ENCODE measurements at regions of chr6 and their contacts with region 1.

Region 1: GRCh38 chr6:45310118-45310788 is 17.9 kb upstream of the RUNX2 start:
- DNase-seq: peak in 8 of 9 donors; percentile 24 to 71 (median 60)
- ATAC-seq: peak; percentile 76
- H3K4me3 ChIP-seq: peak overlapping the region; percentile 32
- H3K4me3 Mint-ChIP-seq: peak overlapping the region; percentile 63 to 84 (median 80)
- H3K27ac ChIP-seq: peak overlapping the region; percentile 44
- H3K27ac Mint-ChIP-seq: peak overlapping the region; percentile 85 to 95 (median 90)
- H3K4me1 ChIP-seq: peaks cover 14 to 33% of the 10 kb centered on the region in 2 donors
- H3K4me1 Mint-ChIP-seq: peaks cover 39 to 86% (median 78%) of the 10 kb centered on the region in 7 donors
- H3K27me3 ChIP-seq: no peaks in the 10 kb centered on the region
- H3K27me3 Mint-ChIP-seq: no peaks in the 10 kb centered on the region

Region 2: DNA sequence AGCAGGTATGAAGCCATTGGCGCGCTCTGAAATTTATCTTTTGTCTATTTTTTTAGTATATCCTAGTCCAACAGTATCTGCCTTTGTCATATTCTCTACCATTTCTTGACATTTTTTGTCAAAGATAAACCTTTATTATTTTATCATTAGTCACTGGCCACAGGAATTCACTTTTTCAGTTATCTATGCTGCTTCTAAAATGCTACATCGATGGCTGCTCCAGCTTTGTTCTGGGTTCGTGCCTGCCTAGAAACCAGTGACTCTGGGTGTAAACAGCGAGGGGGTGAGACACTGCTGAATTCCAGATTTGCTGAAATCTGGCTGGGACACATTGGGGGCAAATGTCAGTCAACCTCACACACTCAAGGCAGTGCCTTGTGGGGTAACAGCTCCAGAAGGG is 729.4 kb before region 1 on chr6:
- CTCF ChIA-PET with region 1: no interaction called
- POLR2A ChIA-PET with region 1: no interaction called
- intact Hi-C with region 1: no loop called
- DNase-seq: no peak
- ATAC-seq: no peak
- H3K4me3 ChIP-seq: no peak overlapping the region
- H3K4me3 Mint-ChIP-seq: no peak overlapping the region
- H3K27ac ChIP-seq: no peak overlapping the region
- H3K27ac Mint-ChIP-seq: no peak overlapping the region
- H3K4me1 ChIP-seq: no peaks in the 10 kb centered on the region
- H3K4me1 Mint-ChIP-seq: no peaks in the 10 kb centered on the region
- H3K27me3 ChIP-seq: no peaks in the 10 kb centered on the region
- H3K27me3 Mint-ChIP-seq: peaks cover 0 to 20% (median 12%) of the 10 kb centered on the region in 5 donors

Region 3: DNA sequence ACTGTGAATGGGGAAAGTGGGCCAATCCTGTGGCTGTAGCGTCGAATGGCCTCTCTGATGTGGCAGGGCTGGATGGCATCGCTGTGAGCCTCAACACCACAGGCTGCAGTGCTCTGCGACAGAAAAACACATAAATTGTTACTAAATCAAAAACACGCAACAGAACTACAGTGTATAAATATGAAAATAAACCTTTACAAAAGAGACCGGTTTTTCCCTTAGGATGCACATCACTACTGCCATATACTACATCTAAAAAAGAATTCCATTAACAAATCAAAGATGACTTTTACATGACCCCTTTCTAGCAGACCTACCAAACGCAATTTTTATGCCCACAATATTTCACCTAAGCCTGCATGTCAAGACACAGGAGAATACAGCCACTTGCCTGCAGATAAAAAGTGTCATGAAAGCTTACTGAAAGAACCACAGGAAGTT is 377.6 kb before region 1 on chr6:
- CTCF ChIA-PET with region 1: no interaction called
- POLR2A ChIA-PET with region 1: interaction called, 4 read pairs
- intact Hi-C with region 1: loop called (anchors 1 to 10 kb)
- DNase-seq: peak in 7 of 9 donors; percentile 46 to 66 (median 58)
- ATAC-seq: peak; percentile 91
- H3K4me3 ChIP-seq: peak overlapping the region; percentile 37
- H3K4me3 Mint-ChIP-seq: peak overlapping the region; percentile 78 to 98 (median 88)
- H3K27ac ChIP-seq: peak overlapping the region; percentile 71
- H3K27ac Mint-ChIP-seq: peak overlapping the region; percentile 92 to 99 (median 96)
- H3K4me1 ChIP-seq: peaks cover 17 to 42% of the 10 kb centered on the region in 2 donors
- H3K4me1 Mint-ChIP-seq: peaks cover 26 to 67% (median 60%) of the 10 kb centered on the region in 7 donors
- H3K27me3 ChIP-seq: no peaks in the 10 kb centered on the region
- H3K27me3 Mint-ChIP-seq: no peaks in the 10 kb centered on the region

Region 4: GRCh38 chr6:45297320-45297719 is 12.9 kb before region 1 on chr6:
- CTCF ChIA-PET with region 1: interaction called, 7 read pairs
- POLR2A ChIA-PET with region 1: interaction called, 4 read pairs
- intact Hi-C with region 1: loop called (anchors 1 kb)
- DNase-seq: no peak
- ATAC-seq: no peak
- H3K4me3 ChIP-seq: no peak overlapping the region
- H3K4me3 Mint-ChIP-seq: no peak overlapping the region
- H3K27ac ChIP-seq: no peak overlapping the region
- H3K27ac Mint-ChIP-seq: peak overlapping the region in 6 of 9 donors; percentile 4 to 56 (median 19)
- H3K4me1 ChIP-seq: peaks cover 0 to 14% of the 10 kb centered on the region in 2 donors
- H3K4me1 Mint-ChIP-seq: peaks cover 21 to 74% (median 43%) of the 10 kb centered on the region in 7 donors
- H3K27me3 ChIP-seq: no peaks in the 10 kb centered on the region
- H3K27me3 Mint-ChIP-seq: no peaks in the 10 kb centered on the region

Region 5: GRCh38 chr6:45327956-45328522 is 17.8 kb after region 1 on chr6 and contains the start of gene RUNX2:
- CTCF ChIA-PET with region 1: interaction called, 5 read pairs
- POLR2A ChIA-PET with region 1: interaction called, 12 read pairs
- intact Hi-C with region 1: loop called in 1 of 2 experiments (anchors 1 kb)
- DNase-seq: peak in 5 of 9 donors; percentile 7 to 20 (median 14)
- ATAC-seq: peak; percentile 74
- H3K4me3 ChIP-seq: peak within 1 kb of the TSS; percentile 25
- H3K4me3 Mint-ChIP-seq: peak within 1 kb of the TSS; percentile 61 to 87 (median 78)
- H3K27ac ChIP-seq: peak within 1 kb of the TSS; percentile 28
- H3K27ac Mint-ChIP-seq: peak within 1 kb of the TSS; percentile 33 to 89 (median 73)
- H3K4me1 ChIP-seq: peaks cover 6 to 28% of the 10 kb centered on the region in 2 donors
- H3K4me1 Mint-ChIP-seq: peaks cover 26 to 85% (median 63%) of the 10 kb centered on the region in 7 donors
- H3K27me3 ChIP-seq: no peaks in the 10 kb centered on the region
- H3K27me3 Mint-ChIP-seq: no peaks in the 10 kb centered on the region
- total RNA-seq, gene RUNX2: 12.8 to 17.9 (median 14.0) TPM

Region 6: DNA sequence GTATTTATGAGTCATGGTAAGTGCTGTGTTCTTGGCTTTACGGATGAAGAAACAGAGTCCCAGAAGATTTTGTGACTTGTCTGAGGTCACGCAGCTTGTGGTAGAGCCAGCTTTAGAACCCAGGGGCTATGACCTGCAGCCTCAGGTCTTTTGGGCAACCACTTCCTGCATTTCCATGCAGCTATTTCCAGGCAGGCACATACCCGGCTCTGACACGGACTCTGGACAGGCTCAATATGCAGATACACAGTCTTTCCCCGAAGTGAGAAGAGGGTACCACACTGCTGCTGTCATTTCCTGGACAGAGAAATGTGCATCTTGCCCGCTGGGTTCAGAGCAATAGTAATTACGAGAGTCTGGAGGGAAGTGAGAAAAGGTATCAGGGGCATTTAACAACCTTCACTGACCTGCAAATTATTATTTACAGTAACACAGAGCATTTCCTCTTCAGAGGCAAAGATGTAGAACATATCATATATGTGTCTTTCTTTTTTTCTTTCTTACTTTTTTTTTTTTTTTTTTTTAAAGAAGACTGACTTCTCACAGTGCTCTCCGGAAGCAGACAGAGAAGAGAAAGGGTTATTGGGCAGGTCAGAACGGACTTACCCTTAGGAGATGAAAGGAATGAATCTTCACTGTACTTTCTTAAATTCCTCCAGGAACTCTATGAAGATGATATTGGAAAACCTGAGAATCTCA is 520.3 kb after region 1 on chr6:
- CTCF ChIA-PET with region 1: no interaction called
- POLR2A ChIA-PET with region 1: no interaction called
- intact Hi-C with region 1: no loop called
- DNase-seq: peak in 1 of 9 donors; percentile 40
- ATAC-seq: peak; percentile 69
- H3K4me3 ChIP-seq: peak overlapping the region; percentile 17
- H3K4me3 Mint-ChIP-seq: peak overlapping the region; percentile 66 to 91 (median 76)
- H3K27ac ChIP-seq: no peak overlapping the region
- H3K27ac Mint-ChIP-seq: peak overlapping the region in 3 of 9 donors; percentile 17 to 84 (median 19)
- H3K4me1 ChIP-seq: peaks cover 0 to 5% of the 10 kb centered on the region in 2 donors
- H3K4me1 Mint-ChIP-seq: peaks cover 10 to 41% (median 17%) of the 10 kb centered on the region in 7 donors
- H3K27me3 ChIP-seq: no peaks in the 10 kb centered on the region
- H3K27me3 Mint-ChIP-seq: peaks cover 0 to 13% (median 5%) of the 10 kb centered on the region in 5 donors

Measured in naive thymus-derived CD4-positive, alpha-beta T cell (primary cell).